RWPE1 (cell line): ENCODE measurements at regions of chr16 and their contacts with region 1.

Region 1: DNA sequence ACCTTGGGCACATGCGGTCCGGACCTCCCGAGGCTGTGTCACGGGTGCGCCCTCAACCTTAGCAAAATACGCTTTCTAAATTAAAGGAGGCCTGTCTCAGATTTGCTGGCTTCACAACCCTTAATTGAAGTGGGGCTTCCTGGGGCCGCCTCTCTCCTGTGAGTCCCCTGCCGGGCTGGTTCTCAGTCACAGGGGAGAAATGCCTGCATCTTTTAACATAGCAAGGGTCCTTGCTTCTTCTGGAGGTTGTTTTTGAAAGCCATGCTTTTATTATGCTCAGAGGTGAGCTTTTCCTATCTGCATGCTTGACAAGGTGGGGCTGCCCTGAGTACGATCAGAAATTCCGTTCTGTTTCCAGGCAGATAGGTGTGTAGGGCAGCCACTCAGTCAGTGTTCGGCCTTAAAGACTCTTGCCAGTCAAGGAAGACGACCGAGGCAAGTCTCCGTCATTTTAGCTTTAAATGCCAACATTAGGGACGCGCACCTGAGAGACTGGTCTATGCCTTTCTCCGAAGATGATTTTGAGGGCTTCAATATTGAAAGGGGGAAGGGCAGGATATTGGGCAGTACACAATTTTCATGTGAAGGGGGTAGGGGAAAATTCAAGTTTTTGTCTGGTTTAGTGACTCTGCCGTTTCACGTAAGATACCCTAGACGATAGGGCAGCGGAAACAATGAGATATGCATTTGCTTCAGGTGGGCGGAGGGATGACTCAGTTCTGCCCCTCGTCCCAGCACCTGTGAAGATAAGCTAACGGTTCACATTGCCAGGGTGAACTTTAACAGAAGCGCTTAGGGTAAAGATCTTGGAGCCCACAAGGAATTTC is 5.5 kb upstream of the SLC7A5 start:
- DNase-seq: no peak
- H3K27ac ChIP-seq: no peak overlapping the region
- CTCF ChIP-seq: no peak

Region 2: GRCh38 chr16:87765776-87766484 is 108.9 kb before region 1 on chr16 and contains the start of gene KLHDC4:
- CTCF ChIA-PET with region 1: interaction called, 20 read pairs
- POLR2A ChIA-PET with region 1: no interaction called
- DNase-seq: peak; percentile 82
- H3K27ac ChIP-seq: peak within 1 kb of the TSS; percentile 82
- CTCF ChIP-seq: no peak

Region 3: GRCh38 chr16:87914812-87915211 is 40.0 kb after region 1 on chr16:
- CTCF ChIA-PET with region 1: interaction called, 14 read pairs
- POLR2A ChIA-PET with region 1: interaction called, 4 read pairs
- DNase-seq: no peak
- H3K27ac ChIP-seq: no peak overlapping the region
- CTCF ChIP-seq: no peak